ENCODE measurements at regions of chr12 and their contacts with region 1.

Region 1: GRCh38 chr12:56224102-56224701 is at the start of gene NABP2:
- DNase-seq: peak; percentile 78 to 97 (median 81)
- ATAC-seq: peak; percentile 85
- H3K4me3 ChIP-seq: peak within 1 kb of the TSS; percentile 82
- H3K4me3 Mint-ChIP-seq: peak within 1 kb of the TSS; percentile 77 to 99 (median 87)
- H3K27ac ChIP-seq: peak within 1 kb of the TSS; percentile 98
- H3K27ac Mint-ChIP-seq: peak within 1 kb of the TSS; percentile 78 to 100 (median 91)
- H3K4me1 ChIP-seq: peaks cover 22 to 27% of the 10 kb centered on the region in 2 donors
- H3K4me1 Mint-ChIP-seq: peaks cover 16 to 57% (median 46%) of the 10 kb centered on the region in 7 donors
- H3K27me3 ChIP-seq: no peaks in the 10 kb centered on the region
- H3K27me3 Mint-ChIP-seq: peaks cover 0 to 3% (median 0%) of the 10 kb centered on the region in 5 donors
- total RNA-seq, gene NABP2: 9.2 to 61.2 (median 11.8) TPM

Region 2: GRCh38 chr12:56127888-56128669 is 96.1 kb before region 1 on chr12 and contains the start of gene ESYT1:
- CTCF ChIA-PET with region 1: interaction called, 5 read pairs
- POLR2A ChIA-PET with region 1: interaction called, 28 read pairs
- intact Hi-C with region 1: loop called in 1 of 2 experiments (anchors 1 kb)
- DNase-seq: peak; percentile 75 to 100 (median 98)
- ATAC-seq: peak; percentile 94
- H3K4me3 ChIP-seq: peak within 1 kb of the TSS; percentile 77
- H3K4me3 Mint-ChIP-seq: peak within 1 kb of the TSS; percentile 95 to 100 (median 98)
- H3K27ac ChIP-seq: peak within 1 kb of the TSS; percentile 84
- H3K27ac Mint-ChIP-seq: peak within 1 kb of the TSS; percentile 86 to 99 (median 91)
- H3K4me1 ChIP-seq: peaks cover 39 to 54% of the 10 kb centered on the region in 2 donors
- H3K4me1 Mint-ChIP-seq: peaks cover 40 to 76% (median 65%) of the 10 kb centered on the region in 7 donors
- H3K27me3 ChIP-seq: no peaks in the 10 kb centered on the region
- H3K27me3 Mint-ChIP-seq: no peaks in the 10 kb centered on the region
- total RNA-seq, gene ESYT1: 121 to 300 (median 221) TPM

Region 3: DNA sequence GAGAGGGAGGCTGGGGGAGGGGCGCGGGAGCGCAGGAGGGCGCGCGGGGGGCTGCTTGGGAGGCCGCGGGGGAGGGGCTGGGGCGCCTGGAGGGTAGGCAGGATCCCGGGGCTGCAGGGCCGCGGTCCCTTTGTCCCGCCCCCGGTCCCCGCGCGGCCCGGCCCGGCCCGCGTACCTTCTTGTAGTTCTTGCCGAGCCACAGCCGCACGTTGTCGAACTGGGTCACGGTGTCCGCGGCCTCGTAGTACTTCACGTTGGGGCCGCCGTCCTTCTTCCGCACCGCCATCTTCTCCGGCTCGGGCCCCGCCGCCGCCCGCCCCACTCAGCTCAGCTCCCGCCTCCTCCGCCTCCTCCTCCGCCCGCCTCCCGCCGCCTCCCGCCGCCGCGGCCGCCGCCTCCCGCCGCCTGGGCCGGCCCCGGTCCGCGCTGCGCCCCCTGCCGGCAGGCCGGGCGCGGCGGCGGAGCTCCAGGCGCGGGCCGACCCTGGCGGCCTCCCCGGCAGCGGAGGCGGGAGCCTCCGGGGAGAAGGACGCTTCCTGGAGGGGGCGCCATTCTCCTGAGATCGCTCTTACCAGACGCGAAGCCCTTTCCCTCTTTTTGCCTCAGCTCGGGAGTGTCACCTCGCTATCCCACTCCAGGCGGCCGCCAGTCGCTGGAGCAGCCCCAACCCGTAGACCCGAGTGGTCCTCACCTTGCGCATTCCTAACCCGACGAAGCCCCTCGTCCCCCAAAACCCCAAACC is 34.9 kb before region 1 on chr12 and contains the start of gene SMARCC2:
- CTCF ChIA-PET with region 1: interaction called, 34 read pairs
- POLR2A ChIA-PET with region 1: interaction called, 55 read pairs
- intact Hi-C with region 1: loop called (anchors 1 kb)
- DNase-seq: peak; percentile 78 to 93 (median 82)
- ATAC-seq: peak; percentile 93
- H3K4me3 ChIP-seq: peak within 1 kb of the TSS; percentile 91
- H3K4me3 Mint-ChIP-seq: peak within 1 kb of the TSS; percentile 76 to 98 (median 95)
- H3K27ac ChIP-seq: peak within 1 kb of the TSS; percentile 92
- H3K27ac Mint-ChIP-seq: peak within 1 kb of the TSS; percentile 93 to 99 (median 98)
- H3K4me1 ChIP-seq: peaks cover 9 to 19% of the 10 kb centered on the region in 2 donors
- H3K4me1 Mint-ChIP-seq: peaks cover 37 to 55% (median 49%) of the 10 kb centered on the region in 7 donors
- H3K27me3 ChIP-seq: no peaks in the 10 kb centered on the region
- H3K27me3 Mint-ChIP-seq: peaks cover 0 to 4% (median 0%) of the 10 kb centered on the region in 5 donors
- total RNA-seq, gene SMARCC2: 118 to 187 (median 149) TPM

Region 4: DNA sequence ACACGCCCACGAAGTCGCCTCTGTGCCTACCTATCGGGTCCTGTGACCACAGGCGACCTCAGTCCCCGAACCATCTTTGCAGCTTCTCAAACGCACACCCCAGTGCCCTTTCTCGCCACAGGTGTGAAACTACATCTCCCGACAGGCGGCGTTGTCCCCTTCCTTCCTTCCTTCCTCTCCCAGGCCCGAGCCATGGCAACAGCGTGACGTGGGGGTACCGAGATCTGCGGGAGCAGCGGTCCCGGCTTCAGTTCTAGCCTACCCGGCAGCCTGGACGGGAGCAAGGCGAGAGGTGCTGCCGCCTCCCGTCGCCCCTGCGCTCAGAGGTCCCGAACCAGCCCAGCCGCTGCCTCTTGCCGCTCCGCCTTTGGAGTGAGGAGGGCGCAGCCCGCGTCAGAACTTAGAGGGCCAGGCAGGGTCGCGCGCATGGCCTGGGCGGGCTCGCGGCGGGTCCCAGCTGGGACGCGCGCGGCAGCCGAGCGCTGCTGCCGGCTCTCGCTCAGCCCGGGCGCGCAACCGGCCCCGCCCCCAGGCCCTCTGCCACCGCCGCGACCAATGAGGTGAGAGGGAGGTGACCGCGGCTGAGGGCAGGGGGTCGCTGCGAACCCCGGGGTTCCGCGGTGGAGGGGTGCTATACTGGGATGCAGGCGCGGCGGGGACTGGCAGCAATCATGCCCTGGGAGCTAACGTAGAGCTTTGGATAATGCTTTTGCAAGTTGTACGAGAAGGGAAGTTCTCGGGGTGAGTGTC is 42.7 kb after region 1 on chr12 and contains the start of gene COQ10A:
- CTCF ChIA-PET with region 1: interaction called, 4 read pairs
- POLR2A ChIA-PET with region 1: interaction called, 16 read pairs
- intact Hi-C with region 1: loop called in 1 of 2 experiments (anchors 1 kb)
- DNase-seq: peak; percentile 78 to 92 (median 89)
- ATAC-seq: peak; percentile 93
- H3K4me3 ChIP-seq: peak within 1 kb of the TSS; percentile 88
- H3K4me3 Mint-ChIP-seq: peak within 1 kb of the TSS; percentile 83 to 100 (median 96)
- H3K27ac ChIP-seq: peak within 1 kb of the TSS; percentile 94
- H3K27ac Mint-ChIP-seq: peak within 1 kb of the TSS; percentile 89 to 97 (median 94)
- H3K4me1 ChIP-seq: peaks cover 0 to 8% of the 10 kb centered on the region in 2 donors
- H3K4me1 Mint-ChIP-seq: peaks cover 0 to 22% (median 20%) of the 10 kb centered on the region in 7 donors
- H3K27me3 ChIP-seq: no peaks in the 10 kb centered on the region
- H3K27me3 Mint-ChIP-seq: peaks cover 0 to 2% (median 0%) of the 10 kb centered on the region in 5 donors
- total RNA-seq, gene COQ10A: 22.5 to 39.4 (median 31.5) TPM

Region 5: GRCh38 chr12:56359851-56360767 is 135.9 kb after region 1 on chr12 and contains the start of gene STAT2:
- CTCF ChIA-PET with region 1: no interaction called
- POLR2A ChIA-PET with region 1: interaction called, 15 read pairs
- intact Hi-C with region 1: loop called (anchors 1 to 2 kb)
- DNase-seq: peak; percentile 94 to 100 (median 99)
- ATAC-seq: peak; percentile 97
- H3K4me3 ChIP-seq: peak within 1 kb of the TSS; percentile 89
- H3K4me3 Mint-ChIP-seq: peak within 1 kb of the TSS; percentile 83 to 99 (median 96)
- H3K27ac ChIP-seq: peak within 1 kb of the TSS; percentile 79
- H3K27ac Mint-ChIP-seq: peak within 1 kb of the TSS; percentile 90 to 98 (median 96)
- H3K4me1 ChIP-seq: peaks cover 16 to 17% of the 10 kb centered on the region in 2 donors
- H3K4me1 Mint-ChIP-seq: peaks cover 14 to 40% (median 27%) of the 10 kb centered on the region in 7 donors
- H3K27me3 ChIP-seq: no peaks in the 10 kb centered on the region
- H3K27me3 Mint-ChIP-seq: no peaks in the 10 kb centered on the region
- total RNA-seq, gene STAT2: 119 to 291 (median 182) TPM